Left colon (tissue), 2 donors: ENCODE measurements at regions of chr3 and their contacts with region 1.

Region 1: GRCh38 chr3:30042274-30042859 is 564.0 kb upstream of the TGFBR2 start:
- DNase-seq: peak; percentile 42 to 65
- ATAC-seq: peak; percentile 79

Region 2: GRCh38 chr3:29494305-29495036 is 547.9 kb before region 1 on chr3:
- intact Hi-C with region 1: no loop called
- DNase-seq: no peak
- ATAC-seq: no peak

Region 3: GRCh38 chr3:30199096-30199759 is 156.9 kb after region 1 on chr3:
- intact Hi-C with region 1: loop called in 1 of 2 experiments (anchors 2 kb)
- DNase-seq: peak; percentile 39 to 83
- ATAC-seq: peak; percentile 59

Region 4: GRCh38 chr3:30696403-30696819 is 654.0 kb after region 1 on chr3:
- intact Hi-C with region 1: loop called in 1 of 2 experiments (anchors 5 kb)
- DNase-seq: no peak
- ATAC-seq: no peak